ENCODE measurements at regions of chr1 and their contacts with region 1.

Region 1: DNA sequence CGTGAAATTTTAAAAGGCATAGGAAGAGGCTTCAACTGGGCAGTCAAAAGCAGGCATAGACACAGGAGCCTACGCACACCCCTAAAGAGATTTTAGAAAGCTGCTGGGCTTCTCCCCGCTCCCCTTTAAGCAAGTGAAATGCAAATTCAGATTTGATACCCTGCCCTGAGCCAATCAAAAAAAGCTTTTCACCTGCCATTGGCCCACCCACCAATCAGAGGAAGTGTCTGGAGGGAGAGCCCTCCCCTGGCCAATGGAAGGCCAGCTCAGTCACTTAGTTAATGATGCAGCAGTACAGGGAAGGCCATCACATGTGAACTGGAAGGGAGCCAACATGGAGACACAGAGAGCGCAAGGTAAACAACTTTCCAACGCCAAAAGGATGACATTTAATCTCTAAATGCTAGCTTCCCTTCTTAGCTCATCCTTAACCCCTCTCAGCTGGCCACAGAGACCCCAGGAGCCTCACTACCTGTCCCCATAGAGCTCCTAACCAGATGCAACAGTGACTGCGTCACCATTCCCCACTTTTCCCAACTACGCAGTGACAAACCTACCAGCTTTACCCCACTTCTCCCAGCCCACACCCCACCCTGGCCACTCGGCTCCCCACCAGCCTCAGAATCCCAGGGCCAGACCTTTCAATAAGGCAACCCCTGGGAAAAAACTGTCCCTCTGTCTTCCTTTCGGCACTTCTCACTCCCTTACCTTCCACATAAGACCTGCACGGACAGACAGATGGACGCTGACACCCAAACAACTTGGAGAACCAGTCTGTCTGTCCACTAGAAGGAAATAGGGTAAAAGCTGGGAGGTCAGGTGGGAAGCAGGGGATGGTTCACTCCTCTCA is 71.0 kb downstream of the CD46 start:
- DNase-seq: peak; percentile 91
- H3K4me3 ChIP-seq: peak overlapping the region; percentile 76
- H3K27ac ChIP-seq: peak overlapping the region; percentile 45
- H3K4me1 ChIP-seq: peaks cover 66% of the 10 kb centered on the region
- CTCF ChIP-seq: no peak

Region 2: GRCh38 chr1:207603777-207604176 is 219.1 kb before region 1 on chr1:
- CTCF ChIA-PET with region 1: no interaction called
- POLR2A ChIA-PET with region 1: no interaction called
- intact Hi-C with region 1: no loop called
- DNase-seq: no peak
- H3K4me3 ChIP-seq: no peak overlapping the region
- H3K27ac ChIP-seq: no peak overlapping the region
- H3K4me1 ChIP-seq: no peaks in the 10 kb centered on the region
- CTCF ChIP-seq: no peak

Region 3: DNA sequence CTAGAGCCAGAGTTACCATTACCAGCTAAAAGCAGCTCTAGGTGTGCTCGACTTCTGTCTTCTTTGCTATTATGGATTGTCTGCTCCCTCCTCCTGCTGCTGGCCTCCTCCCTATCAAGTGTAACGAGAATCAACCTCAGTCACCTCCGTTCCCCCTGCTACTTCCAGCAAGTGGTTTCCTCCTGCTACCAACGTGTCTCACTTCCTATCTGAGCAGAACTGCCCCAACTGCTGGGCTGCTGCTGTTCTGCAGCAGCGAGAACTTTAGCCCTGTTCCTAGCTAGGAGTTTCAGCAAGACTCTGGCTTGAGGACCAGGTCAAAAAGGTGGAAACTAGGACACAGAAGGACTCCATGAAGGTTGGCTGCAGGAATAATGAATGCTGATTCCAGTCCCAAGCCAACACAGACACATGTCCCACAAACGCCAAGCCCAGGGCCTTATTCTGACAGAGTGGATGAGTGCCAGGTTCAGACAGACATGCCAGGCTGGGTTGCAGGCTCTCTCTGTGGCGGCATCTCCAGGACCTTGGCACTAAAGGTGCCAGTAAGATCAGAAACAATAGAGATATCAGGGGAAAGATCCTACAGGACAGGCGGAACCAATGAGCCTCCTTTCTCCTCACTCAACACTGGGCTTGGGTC is 41.2 kb after region 1 on chr1:
- CTCF ChIA-PET with region 1: interaction called, 11 read pairs
- POLR2A ChIA-PET with region 1: interaction called, 109 read pairs
- intact Hi-C with region 1: loop called (anchors 1 kb)
- DNase-seq: peak; percentile 72
- H3K4me3 ChIP-seq: no peak overlapping the region
- H3K27ac ChIP-seq: no peak overlapping the region
- H3K4me1 ChIP-seq: peaks cover 18% of the 10 kb centered on the region
- CTCF ChIP-seq: peak; percentile 30; the same call in 1 of the 2 replicates

Region 4: GRCh38 chr1:208025031-208025430 is 202.2 kb after region 1 on chr1:
- CTCF ChIA-PET with region 1: no interaction called
- POLR2A ChIA-PET with region 1: no interaction called
- intact Hi-C with region 1: no loop called
- DNase-seq: no peak
- H3K4me3 ChIP-seq: no peak overlapping the region
- H3K27ac ChIP-seq: no peak overlapping the region
- H3K4me1 ChIP-seq: no peaks in the 10 kb centered on the region
- CTCF ChIP-seq: no peak

Region 5: GRCh38 chr1:208101661-208102431 is 279.0 kb after region 1 on chr1:
- CTCF ChIA-PET with region 1: no interaction called
- POLR2A ChIA-PET with region 1: no interaction called
- intact Hi-C with region 1: no loop called
- DNase-seq: no peak
- H3K4me3 ChIP-seq: no peak overlapping the region
- H3K27ac ChIP-seq: no peak overlapping the region
- H3K4me1 ChIP-seq: no peaks in the 10 kb centered on the region
- CTCF ChIP-seq: no peak

Region 6: GRCh38 chr1:208189183-208189582 is 366.4 kb after region 1 on chr1:
- CTCF ChIA-PET with region 1: interaction called, 11 read pairs
- POLR2A ChIA-PET with region 1: no interaction called
- intact Hi-C with region 1: no loop called
- DNase-seq: no peak
- H3K4me3 ChIP-seq: no peak overlapping the region
- H3K27ac ChIP-seq: no peak overlapping the region
- H3K4me1 ChIP-seq: no peaks in the 10 kb centered on the region
- CTCF ChIP-seq: no peak